ENCODE measurements at regions of chr4 and their contacts with region 1.

Region 1: GRCh38 chr4:81471588-81472288 is at the start of gene RASGEF1B:
- DNase-seq: peak; percentile 91
- H3K4me3 Mint-ChIP-seq: peak within 1 kb of the TSS; percentile 93
- H3K27ac Mint-ChIP-seq: peak within 1 kb of the TSS; percentile 92
- H3K4me1 Mint-ChIP-seq: peaks cover 50% of the 10 kb centered on the region
- H3K27me3 Mint-ChIP-seq: peaks cover 22% of the 10 kb centered on the region
- total RNA-seq, gene RASGEF1B: 3.6 and 3.7 TPM in 2 replicates

Region 2: GRCh38 chr4:81326581-81326980 is 145.2 kb before region 1 on chr4:
- intact Hi-C with region 1: no loop called
- DNase-seq: no peak
- H3K4me3 Mint-ChIP-seq: no peak overlapping the region
- H3K27ac Mint-ChIP-seq: no peak overlapping the region
- H3K4me1 Mint-ChIP-seq: no peaks in the 10 kb centered on the region
- H3K27me3 Mint-ChIP-seq: no peaks in the 10 kb centered on the region

Region 3: GRCh38 chr4:81505004-81505598 is 33.4 kb after region 1 on chr4:
- intact Hi-C with region 1: loop called (anchors 1 kb)
- DNase-seq: peak; percentile 48
- H3K4me3 Mint-ChIP-seq: peak overlapping the region; percentile 30
- H3K27ac Mint-ChIP-seq: peak overlapping the region; percentile 45
- H3K4me1 Mint-ChIP-seq: peaks cover 36% of the 10 kb centered on the region
- H3K27me3 Mint-ChIP-seq: peaks cover 11% of the 10 kb centered on the region

Region 4: DNA sequence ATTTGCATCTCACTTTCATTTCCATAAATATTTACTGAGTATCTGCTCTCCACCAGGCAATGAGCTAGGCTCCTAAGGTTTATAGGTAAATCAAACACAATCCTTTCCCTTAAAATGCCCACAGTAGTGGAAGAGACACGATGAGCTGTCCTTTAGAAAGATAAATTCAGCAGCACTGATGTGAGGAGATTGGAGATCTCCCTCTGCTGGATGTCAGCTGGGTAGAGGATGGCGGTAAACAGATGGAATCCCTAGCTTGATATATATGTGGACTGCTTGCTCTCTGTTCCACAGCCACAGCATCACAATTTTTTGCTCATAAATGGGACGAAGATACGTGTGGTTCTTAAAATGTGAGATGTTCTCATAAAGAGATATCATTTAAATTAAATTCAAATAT is 216.3 kb after region 1 on chr4:
- intact Hi-C with region 1: loop called (anchors 1 kb)
- DNase-seq: no peak
- H3K4me3 Mint-ChIP-seq: no peak overlapping the region
- H3K27ac Mint-ChIP-seq: no peak overlapping the region
- H3K4me1 Mint-ChIP-seq: no peaks in the 10 kb centered on the region
- H3K27me3 Mint-ChIP-seq: no peaks in the 10 kb centered on the region

Region 5: DNA sequence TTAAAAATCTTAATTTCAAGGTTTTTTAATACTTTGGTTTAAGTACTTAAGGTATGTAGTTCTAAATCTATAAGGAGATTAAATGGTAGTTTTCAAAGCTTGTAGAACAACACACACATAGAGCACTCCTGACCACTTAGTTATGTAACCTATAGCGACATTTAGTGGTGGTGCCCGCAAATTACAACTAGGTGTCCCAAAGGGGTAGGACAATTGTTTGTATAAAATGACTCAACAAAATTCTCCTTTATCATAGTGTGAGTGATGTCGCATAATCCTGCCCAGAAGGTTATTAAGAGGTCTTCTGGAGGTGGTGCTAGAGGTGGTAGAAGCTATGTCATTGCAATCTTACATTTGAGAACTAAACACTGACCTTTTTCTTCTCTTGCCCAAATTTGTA is 373.0 kb after region 1 on chr4:
- intact Hi-C with region 1: loop called (anchors 1 kb)
- DNase-seq: peak; percentile 46
- H3K4me3 Mint-ChIP-seq: no peak overlapping the region
- H3K27ac Mint-ChIP-seq: no peak overlapping the region
- H3K4me1 Mint-ChIP-seq: peaks cover 4% of the 10 kb centered on the region
- H3K27me3 Mint-ChIP-seq: peaks cover 7% of the 10 kb centered on the region

Region 6: DNA sequence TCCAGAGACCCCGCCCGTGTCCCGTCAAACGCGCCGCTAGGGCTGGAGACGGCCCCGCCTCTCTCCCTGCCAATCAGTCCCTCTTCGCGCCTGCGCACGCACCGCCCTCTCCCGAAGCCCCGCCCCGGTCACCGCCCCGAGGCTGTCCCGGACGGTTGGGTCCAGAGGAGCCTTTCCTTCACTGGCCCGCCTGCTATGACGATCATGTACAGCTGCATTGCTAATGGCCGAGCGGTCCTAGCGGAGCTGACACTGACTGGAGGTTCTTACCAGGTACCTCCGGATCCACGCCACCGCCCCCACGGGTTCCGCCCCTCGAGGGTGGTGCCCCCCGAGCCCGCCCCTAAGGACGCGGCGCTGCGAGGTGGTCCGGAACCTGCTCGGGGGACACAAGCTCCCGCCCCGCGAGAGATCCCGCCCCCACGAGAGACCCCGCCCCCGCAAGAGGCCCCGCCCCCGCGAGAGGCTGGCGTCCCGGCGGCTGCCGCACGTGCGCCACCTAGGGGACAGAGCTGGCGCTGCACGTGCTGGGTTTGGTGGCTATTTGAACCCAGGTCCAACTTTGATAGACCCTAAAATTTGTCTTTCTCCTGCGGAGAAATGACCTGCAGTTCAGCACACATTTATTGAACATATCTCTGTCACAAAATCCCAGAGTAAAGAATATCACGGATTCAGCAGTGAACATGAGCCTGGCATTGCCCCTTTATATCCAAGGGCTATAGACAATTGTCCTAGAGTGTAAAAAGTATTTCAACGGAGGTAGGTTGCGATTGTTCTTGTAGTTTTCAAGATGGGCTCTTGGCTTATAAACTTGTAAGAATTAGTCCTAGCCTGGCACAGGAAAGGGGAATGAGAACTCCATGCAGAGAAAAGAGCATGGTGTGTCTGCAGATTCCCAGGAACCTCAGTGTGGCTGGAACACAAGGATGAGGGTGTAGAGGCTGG is 813.4 kb after region 1 on chr4:
- intact Hi-C with region 1: loop called (anchors 1 kb)
- DNase-seq: peak; percentile 99
- H3K4me3 Mint-ChIP-seq: peak overlapping the region; percentile 80
- H3K27ac Mint-ChIP-seq: peak overlapping the region; percentile 27
- H3K4me1 Mint-ChIP-seq: peaks cover 14% of the 10 kb centered on the region
- H3K27me3 Mint-ChIP-seq: peaks cover 24% of the 10 kb centered on the region

Region 7: DNA sequence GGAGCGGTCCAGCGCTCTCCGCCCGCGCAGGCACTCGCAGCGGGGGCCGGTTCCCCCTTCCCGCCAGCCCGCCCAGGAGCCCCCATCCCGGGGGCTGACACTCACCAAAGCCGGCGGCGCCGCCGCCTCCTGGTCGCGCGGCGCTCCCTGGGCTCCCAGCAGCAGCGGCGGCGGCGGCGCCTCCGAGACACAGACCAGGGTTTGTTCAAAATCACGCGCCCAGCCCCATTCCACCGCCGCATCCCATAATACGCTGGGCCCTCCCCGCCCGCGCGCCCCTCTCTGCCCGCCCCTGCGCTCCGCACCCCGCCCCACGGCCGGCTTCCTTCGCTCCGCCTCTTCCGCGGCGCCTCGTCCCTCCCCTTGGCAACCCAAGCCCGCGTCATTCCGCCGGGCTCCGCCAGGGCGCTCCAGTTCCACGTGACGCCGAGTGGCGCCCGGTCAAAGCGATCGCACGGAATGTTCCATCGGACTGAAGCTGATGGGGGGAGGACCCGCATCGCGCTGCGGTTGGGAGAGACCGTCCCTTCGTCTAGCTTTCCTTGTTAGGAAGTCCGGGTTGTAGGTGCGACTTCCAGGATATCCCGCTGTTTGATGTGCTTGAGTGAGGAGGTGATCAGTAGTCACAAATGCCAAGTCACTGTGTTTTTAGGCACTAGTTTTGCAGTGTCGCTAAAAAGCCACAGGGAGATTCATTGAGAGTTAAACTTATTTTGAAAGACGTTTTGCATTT is 1541.1 kb after region 1 on chr4:
- intact Hi-C with region 1: loop called (anchors 10 kb)
- DNase-seq: peak; percentile 97
- H3K4me3 Mint-ChIP-seq: peak overlapping the region; percentile 91
- H3K27ac Mint-ChIP-seq: peak overlapping the region; percentile 92
- H3K4me1 Mint-ChIP-seq: peaks cover 45% of the 10 kb centered on the region
- H3K27me3 Mint-ChIP-seq: no peaks in the 10 kb centered on the region

Measured in activated T-helper 1 cell treated with anti-CD3 and anti-CD28 coated beads, Interleukin-12 subunit alpha, Interleukin-12 subunit beta, Interleukin-2, Interleukin-4 antibody, amounts not matched to agents 30 ng/mL and 10 ng/mL and 1 ng/mL, durations not matched to agents 14 hours and 24 hours and 36 hours (primary cell).